Activated T-helper 1 cell treated with anti-CD3 and anti-CD28 coated beads, Interleukin-12 subunit alpha, Interleukin-12 subunit beta, Interleukin-2, Interleukin-4 antibody, amounts not matched to agents 30 ng/mL and 10 ng/mL and 1 ng/mL, durations not matched to agents 14 hours and 24 hours and 36 hours (primary cell): ENCODE measurements at regions of chr15 and their contacts with region 1.

Region 1: GRCh38 chr15:58484791-58485600 is 53.2 kb downstream of the LIPC start:
- DNase-seq: peak; percentile 55
- H3K4me3 Mint-ChIP-seq: peak overlapping the region; percentile 56
- H3K27ac Mint-ChIP-seq: peak overlapping the region; percentile 99
- H3K4me1 Mint-ChIP-seq: peaks cover 51% of the 10 kb centered on the region
- H3K27me3 Mint-ChIP-seq: no peaks in the 10 kb centered on the region

Region 2: DNA sequence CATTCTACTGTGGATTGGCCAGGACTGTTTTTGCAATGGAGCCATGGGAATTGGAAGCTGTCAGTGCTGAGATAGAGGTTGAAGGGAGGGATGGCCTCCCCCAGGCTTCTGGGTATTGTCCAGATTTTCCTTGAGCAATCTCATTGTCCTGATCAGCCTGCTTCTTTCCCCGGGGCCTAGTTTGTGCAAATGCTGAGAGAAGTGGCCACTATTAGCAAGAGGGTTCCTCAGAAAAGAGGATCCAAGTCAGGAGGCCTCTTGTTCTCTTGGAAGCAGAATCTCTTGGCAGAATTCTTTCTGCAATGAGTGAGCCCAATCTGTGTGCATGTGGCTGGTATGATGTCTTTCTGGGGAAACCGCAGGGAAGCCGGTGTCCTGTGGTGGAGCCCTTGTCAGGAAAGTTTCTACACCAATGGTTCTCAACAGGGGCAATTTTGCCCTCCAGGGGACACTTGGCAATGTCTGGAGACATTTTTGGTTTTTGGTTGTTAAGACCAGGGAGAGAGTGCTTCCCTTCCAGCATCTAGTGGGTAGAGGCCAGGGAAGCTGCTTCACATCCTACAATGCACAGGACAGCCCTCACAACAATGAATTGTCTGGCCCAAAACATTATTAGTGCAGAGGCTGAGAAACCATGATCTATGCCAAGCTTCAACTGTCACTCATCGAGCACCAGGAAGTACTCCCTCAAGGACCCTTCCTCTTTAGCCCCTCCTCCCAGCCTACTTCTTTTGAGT is 51.2 kb before region 1 on chr15:
- intact Hi-C with region 1: no loop called
- DNase-seq: no peak
- H3K4me3 Mint-ChIP-seq: no peak overlapping the region
- H3K27ac Mint-ChIP-seq: no peak overlapping the region
- H3K4me1 Mint-ChIP-seq: peaks cover 2% of the 10 kb centered on the region
- H3K27me3 Mint-ChIP-seq: no peaks in the 10 kb centered on the region

Region 3: DNA sequence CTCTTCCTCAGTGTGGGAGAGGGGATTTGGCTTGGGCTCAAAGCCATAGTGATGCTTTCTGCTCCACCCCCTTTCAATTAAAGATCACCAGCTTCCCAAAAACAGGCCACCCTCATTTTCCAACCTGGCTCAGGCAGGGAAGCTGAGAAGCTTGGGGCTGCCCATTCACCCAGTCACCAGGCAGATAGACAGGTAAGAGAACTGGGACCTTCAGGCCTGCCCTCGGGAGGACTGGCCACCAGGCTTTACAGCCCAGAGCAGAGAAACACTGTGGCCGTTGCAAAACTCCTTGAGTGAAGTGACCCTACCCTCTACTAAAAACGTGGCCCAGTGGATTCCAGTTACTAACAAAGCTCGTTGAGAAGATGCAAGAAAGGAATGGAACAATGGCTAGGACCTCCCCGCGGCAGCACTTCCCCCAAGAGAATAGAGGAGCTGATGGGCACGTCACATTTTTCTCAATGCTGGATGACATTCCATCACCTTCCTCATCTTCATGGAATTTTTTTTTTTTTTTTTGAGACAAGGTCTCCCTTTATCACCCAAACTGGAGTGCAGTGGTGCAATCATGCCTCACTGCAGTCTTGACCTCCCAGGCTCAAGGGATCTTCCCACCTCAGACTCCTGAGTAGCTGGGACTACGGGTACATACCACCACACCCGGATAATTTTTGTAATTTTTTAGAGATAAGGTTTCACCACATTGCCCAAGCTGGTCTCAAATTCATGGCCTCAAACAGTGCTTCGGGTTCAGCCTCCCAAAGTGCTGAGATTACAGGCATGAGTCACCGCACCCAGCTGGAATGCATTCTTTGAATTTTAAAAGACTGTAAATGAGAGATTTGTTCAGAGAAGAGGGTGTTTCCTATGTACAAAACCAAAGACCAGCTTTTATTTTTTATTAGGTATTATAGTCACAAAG is 15.3 kb before region 1 on chr15:
- intact Hi-C with region 1: loop called (anchors 1 kb)
- DNase-seq: no peak
- H3K4me3 Mint-ChIP-seq: no peak overlapping the region
- H3K27ac Mint-ChIP-seq: no peak overlapping the region
- H3K4me1 Mint-ChIP-seq: peaks cover 59% of the 10 kb centered on the region
- H3K27me3 Mint-ChIP-seq: no peaks in the 10 kb centered on the region

Region 4: GRCh38 chr15:58505581-58505980 is 20.6 kb after region 1 on chr15:
- intact Hi-C with region 1: loop called (anchors 2 kb)
- DNase-seq: no peak
- H3K4me3 Mint-ChIP-seq: no peak overlapping the region
- H3K27ac Mint-ChIP-seq: peak overlapping the region; percentile 66
- H3K4me1 Mint-ChIP-seq: peaks cover 45% of the 10 kb centered on the region
- H3K27me3 Mint-ChIP-seq: peaks cover 5% of the 10 kb centered on the region

Region 5: GRCh38 chr15:58967479-58967878 is 482.5 kb after region 1 on chr15:
- intact Hi-C with region 1: no loop called
- DNase-seq: no peak
- H3K4me3 Mint-ChIP-seq: no peak overlapping the region
- H3K27ac Mint-ChIP-seq: no peak overlapping the region
- H3K4me1 Mint-ChIP-seq: no peaks in the 10 kb centered on the region
- H3K27me3 Mint-ChIP-seq: peaks cover 11% of the 10 kb centered on the region